Sigmoid colon (tissue), 7 donors: ENCODE measurements at regions of chr5 and their contacts with region 1.

Region 1: DNA sequence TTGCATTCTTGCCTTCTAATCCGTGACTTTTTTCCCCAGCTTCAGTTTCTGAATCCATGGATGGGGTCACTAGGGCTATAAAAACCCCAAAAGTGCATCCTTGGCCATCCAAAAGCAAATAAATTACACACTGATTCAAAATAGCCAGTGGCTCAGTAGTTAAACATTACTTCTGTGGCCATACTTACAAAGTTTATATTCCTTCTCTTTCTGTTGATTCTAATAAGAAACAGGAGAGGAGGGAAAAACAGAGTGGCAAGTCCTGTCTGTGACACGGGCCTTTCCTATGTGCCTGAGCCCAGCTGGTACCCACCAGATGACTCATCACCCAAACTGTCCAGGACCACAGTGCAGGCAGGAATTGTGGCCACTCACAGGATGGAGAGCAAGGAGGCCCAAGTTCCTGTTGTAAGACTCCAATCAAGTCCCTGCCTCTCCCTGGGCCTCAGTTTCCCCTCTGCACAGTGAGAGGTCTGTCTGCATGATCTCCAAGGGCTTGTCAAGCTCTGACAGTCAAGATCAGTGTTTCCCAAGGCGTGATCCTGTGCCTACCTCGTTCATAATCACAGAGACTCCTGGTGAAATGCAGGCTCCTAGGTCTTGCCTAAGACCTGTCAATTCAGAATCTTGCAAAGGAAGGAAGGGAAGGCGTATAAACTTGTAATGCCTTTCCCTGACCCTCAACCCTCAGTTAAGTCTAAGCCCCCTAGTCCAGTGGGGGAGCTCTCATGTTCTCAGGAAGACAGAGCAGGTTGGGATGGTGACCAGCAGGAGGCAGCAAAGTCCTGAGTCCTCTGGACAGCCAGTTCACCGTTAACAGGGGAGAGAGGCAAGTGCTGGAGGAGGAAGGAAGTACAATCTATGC is 29.5 kb downstream of the TNIP1 start:
- DNase-seq: peak; percentile 92
- H3K4me3 ChIP-seq: no peak overlapping the region
- H3K27ac ChIP-seq: peak overlapping the region in 1 of 4 donors; percentile 9
- H3K4me1 ChIP-seq: peaks cover 0 to 8% (median 6%) of the 10 kb centered on the region in 4 donors
- H3K27me3 ChIP-seq: no peaks in the 10 kb centered on the region
- CTCF ChIP-seq: peak; percentile 84 to 96 (median 94)
- EP300 ChIP-seq: no peak
- POLR2A ChIP-seq: no peak

Region 2: DNA sequence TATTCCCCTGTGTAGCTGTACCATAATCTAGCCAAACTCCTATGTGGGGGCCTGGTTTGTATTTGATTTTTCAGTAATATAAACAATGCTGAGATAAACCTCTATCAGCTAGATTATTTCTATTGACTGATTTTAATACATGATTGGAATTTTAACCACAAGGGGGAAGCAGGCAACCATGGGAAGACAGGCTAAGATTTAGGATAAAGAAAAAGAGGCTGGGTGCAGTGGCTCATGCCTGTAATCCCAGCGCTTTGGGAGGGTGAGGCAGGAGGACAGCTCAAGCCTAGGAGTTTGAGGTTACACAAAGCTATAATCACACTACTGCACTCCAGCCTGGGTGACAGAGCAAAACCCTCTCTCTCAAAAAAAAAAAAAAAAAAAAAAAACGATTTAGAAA is 49.0 kb before region 1 on chr5:
- intact Hi-C with region 1: loop called (anchors 5 kb)
- DNase-seq: no peak
- H3K4me3 ChIP-seq: no peak overlapping the region
- H3K27ac ChIP-seq: no peak overlapping the region
- H3K4me1 ChIP-seq: peaks cover 0 to 37% (median 30%) of the 10 kb centered on the region in 4 donors
- H3K27me3 ChIP-seq: no peaks in the 10 kb centered on the region
- CTCF ChIP-seq: peak; percentile 24 to 55 (median 48)
- EP300 ChIP-seq: no peak
- POLR2A ChIP-seq: no peak

Region 3: GRCh38 chr5:151115274-151115905 is 64.1 kb after region 1 on chr5:
- intact Hi-C with region 1: loop called (anchors 1 kb)
- DNase-seq: peak; percentile 88
- H3K4me3 ChIP-seq: no peak overlapping the region
- H3K27ac ChIP-seq: peak overlapping the region in 2 of 4 donors; percentile 37 to 39
- H3K4me1 ChIP-seq: peaks cover 0 to 11% (median 3%) of the 10 kb centered on the region in 4 donors
- H3K27me3 ChIP-seq: no peaks in the 10 kb centered on the region
- CTCF ChIP-seq: peak; percentile 84 to 98 (median 96)
- EP300 ChIP-seq: no peak
- POLR2A ChIP-seq: no peak

Region 4: DNA sequence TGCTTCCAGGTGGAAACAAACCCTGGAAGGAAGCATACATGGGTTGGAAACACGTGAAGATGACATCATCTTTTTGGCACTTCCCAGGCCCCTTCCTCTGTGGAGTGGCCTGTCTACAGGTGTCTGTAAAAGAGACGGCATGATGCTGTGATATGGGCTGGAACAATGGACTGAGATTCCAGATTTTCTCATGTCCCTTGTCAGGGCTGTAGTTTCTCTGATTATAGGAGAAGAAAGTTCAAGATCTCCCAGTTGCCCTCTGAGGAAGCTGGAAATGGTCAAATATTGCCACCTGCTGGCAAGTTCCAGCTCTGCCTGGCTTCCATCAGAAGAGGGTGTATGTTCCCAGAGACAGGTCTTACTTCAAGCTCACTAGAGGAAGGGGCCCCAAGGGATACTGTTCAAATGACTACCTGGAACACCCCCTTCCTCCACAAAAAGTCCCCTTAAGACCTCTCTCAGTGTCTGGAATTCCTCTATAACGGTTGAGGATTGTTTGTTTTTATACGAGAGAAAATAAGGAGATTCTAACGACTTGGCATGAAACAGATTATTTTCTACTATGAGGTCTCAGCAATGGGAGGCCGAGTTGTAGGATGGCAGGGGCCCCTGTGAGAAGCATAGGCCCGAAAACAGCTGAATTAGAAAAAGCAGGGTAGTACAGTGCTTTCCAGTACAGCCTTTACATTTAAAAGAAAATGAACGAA is 113.5 kb after region 1 on chr5:
- intact Hi-C with region 1: loop called (anchors 2 kb)
- DNase-seq: peak; percentile 91
- H3K4me3 ChIP-seq: no peak overlapping the region
- H3K27ac ChIP-seq: peak overlapping the region in 1 of 4 donors; percentile 33
- H3K4me1 ChIP-seq: peaks cover 0 to 28% (median 16%) of the 10 kb centered on the region in 4 donors
- H3K27me3 ChIP-seq: no peaks in the 10 kb centered on the region
- CTCF ChIP-seq: peak; percentile 82 to 87 (median 86)
- EP300 ChIP-seq: no peak
- POLR2A ChIP-seq: no peak